Aorta (tissue), 5 donors: ENCODE measurements at regions of chr16 and their contacts with region 1.

Region 1: DNA sequence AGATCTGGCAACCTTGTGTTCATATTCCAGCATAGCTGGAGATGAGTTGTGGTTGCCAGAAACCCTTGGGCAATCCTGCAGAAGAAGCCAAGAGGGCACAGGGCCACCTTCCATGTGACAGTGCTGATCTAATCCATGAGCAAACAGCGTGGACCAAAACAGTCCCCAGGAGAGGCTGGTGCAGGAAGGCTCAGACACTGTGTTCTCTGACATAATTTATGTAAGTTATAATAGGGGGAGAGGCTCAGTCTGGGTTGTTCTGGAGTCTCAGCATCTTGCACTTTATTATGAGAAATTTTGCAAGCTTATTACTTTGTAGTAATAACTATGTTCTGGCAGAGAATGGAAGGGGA is 273.9 kb downstream of the HAPSTR1 start:
- DNase-seq: peak; percentile 82 to 86
- ATAC-seq: peak; percentile 93
- H3K4me3 ChIP-seq: no peak overlapping the region
- H3K27ac ChIP-seq: no peak overlapping the region
- H3K4me1 ChIP-seq: peaks cover 0 to 4% of the 10 kb centered on the region in 2 donors
- H3K27me3 ChIP-seq: no peaks in the 10 kb centered on the region

Region 2: DNA sequence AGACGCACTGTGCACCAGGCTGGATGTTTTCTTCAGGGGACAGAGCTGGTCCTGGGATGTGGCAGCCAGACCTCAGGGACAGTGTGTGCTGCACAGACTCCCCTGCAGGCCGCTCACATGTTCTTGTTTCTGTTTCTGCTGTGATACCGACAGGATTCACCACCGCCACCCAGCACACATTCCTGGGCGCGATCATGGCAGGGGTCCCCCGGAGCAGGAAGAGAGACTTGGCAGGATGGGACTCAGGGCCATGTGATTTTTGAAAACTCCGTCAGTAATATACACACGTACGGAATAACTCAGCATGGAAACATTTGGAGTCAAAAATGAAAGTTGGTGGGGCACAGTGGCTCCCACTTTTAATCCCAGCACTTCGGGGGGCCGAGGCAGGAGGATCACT is 194.9 kb before region 1 on chr16:
- intact Hi-C with region 1: no loop called
- DNase-seq: no peak
- ATAC-seq: no peak
- H3K4me3 ChIP-seq: no peak overlapping the region
- H3K27ac ChIP-seq: no peak overlapping the region
- H3K4me1 ChIP-seq: no peaks in the 10 kb centered on the region
- H3K27me3 ChIP-seq: no peaks in the 10 kb centered on the region

Region 3: DNA sequence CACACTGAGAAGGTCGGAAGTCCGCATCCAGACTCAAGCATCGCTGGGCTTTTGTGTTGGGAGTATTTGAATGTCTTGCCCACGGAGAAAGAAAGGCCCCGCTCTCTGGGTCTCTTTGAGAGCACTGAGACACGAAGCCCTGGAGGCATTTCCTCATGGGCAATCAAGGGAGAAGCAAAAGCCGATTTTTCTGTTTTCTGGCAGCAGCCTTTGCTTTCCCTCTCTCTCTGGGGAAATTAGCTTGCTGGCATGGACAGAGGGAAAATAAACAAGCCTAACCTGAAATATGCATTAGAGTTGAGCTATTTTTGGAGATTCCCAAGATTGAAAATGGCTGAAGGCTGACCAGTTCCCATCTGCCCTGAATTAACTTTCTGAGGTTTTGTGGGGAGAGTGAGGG is 35.3 kb before region 1 on chr16:
- intact Hi-C with region 1: loop called in 1 of 2 experiments (anchors 5 kb)
- DNase-seq: no peak
- ATAC-seq: peak; percentile 55
- H3K4me3 ChIP-seq: no peak overlapping the region
- H3K27ac ChIP-seq: peak overlapping the region; percentile 4 to 79
- H3K4me1 ChIP-seq: peaks cover 5 to 11% of the 10 kb centered on the region in 2 donors
- H3K27me3 ChIP-seq: no peaks in the 10 kb centered on the region

Region 4: DNA sequence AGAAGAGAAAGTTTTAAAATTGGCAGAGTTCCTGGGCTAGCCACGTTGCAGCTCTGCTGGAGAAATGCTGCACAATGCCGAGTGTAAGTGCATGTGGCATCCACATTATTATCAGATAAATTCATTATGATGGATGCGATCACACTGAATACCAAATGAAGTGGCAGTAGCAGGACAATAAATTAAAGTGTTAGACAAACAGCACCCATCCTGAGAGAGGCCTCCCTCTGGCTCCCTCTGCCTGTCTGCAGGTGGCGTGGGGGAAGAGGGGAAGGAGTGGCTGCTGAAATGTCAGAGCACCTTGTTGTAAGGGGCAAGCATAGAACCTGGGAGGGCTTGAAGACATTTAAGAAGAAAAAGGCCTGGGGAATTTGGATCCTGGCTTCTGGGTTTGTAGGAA is 50.2 kb after region 1 on chr16:
- intact Hi-C with region 1: no loop called
- DNase-seq: no peak
- ATAC-seq: no peak
- H3K4me3 ChIP-seq: no peak overlapping the region
- H3K27ac ChIP-seq: no peak overlapping the region
- H3K4me1 ChIP-seq: no peaks in the 10 kb centered on the region
- H3K27me3 ChIP-seq: no peaks in the 10 kb centered on the region

Region 5: GRCh38 chr16:9457215-9457614 is 91.9 kb after region 1 on chr16:
- intact Hi-C with region 1: no loop called
- DNase-seq: no peak
- ATAC-seq: no peak
- H3K4me3 ChIP-seq: no peak overlapping the region
- H3K27ac ChIP-seq: no peak overlapping the region
- H3K4me1 ChIP-seq: no peaks in the 10 kb centered on the region
- H3K27me3 ChIP-seq: no peaks in the 10 kb centered on the region